HEK293 (cell line): ENCODE measurements at regions of chr1 and their contacts with region 1.

Region 1: DNA sequence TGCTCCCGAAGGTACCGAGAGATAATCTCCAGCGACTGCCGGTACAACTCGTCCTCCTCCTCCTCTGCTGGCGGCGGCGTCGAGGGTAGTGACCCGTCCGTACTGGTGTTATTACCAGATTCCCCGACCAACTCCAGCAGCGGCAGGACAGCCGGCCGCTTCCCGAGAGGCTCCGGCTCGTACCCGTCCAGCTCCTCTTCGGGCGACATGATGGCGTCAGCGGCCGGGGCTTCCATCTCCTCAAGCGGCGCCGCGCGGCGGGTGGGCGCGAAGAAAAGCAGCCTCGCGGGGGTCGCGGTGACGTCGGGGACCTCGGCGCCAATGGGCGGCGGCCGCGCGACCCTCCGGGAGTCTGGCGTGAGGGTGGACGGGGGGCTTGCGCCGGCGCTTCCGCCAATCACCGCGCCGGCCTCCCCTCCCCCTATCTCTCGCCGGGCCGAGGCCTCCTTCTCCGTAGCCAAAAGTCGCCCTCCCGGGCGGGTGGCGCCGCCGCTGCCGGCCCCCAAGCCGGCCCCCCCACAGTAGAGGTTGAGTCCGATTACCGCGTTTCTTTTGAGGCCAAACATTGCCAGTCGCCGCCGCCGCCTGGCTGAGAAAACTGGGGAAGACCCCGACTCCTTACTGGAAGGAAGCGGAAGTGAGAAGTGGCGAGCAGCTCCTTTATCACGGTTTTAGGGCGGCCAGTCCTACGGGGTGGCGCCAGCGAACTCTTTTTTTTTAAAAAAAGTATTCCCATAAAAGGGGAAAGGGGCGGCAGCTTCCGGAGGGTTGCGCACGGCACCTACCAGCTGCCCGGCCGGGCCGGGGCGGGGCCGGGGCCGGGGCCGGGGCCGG is at the start of gene MCL1:
- H3K4me3 ChIP-seq: peak within 1 kb of the TSS; percentile 82
- H3K27ac ChIP-seq: peak within 1 kb of the TSS; percentile 95
- H3K4me1 ChIP-seq: no peaks in the 10 kb centered on the region
- CTCF ChIP-seq: no peak

Region 2: DNA sequence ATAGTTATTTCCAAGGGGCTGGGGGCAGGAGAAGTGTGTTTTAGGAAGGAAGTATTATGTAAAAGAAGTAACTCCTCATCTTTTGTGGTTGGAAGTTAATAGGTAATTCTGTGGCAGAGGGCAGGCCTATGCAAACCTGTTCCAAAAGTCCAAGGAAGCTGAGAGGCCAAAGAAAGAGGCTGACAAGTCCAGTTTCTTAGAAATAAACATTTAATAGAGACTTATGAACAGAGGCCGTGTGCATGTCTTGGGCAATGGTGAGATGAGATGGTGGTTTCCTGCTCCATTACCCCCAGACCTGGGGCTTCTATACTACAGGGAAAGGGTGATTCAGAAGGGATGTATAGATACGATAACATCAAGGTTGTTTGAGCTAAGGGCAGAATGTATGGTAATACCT is 329.2 kb before region 1 on chr1:
- CTCF ChIA-PET with region 1: no interaction called
- POLR2A ChIA-PET with region 1: no interaction called
- H3K4me3 ChIP-seq: no peak overlapping the region
- H3K27ac ChIP-seq: no peak overlapping the region
- H3K4me1 ChIP-seq: no peaks in the 10 kb centered on the region
- CTCF ChIP-seq: no peak

Region 3: DNA sequence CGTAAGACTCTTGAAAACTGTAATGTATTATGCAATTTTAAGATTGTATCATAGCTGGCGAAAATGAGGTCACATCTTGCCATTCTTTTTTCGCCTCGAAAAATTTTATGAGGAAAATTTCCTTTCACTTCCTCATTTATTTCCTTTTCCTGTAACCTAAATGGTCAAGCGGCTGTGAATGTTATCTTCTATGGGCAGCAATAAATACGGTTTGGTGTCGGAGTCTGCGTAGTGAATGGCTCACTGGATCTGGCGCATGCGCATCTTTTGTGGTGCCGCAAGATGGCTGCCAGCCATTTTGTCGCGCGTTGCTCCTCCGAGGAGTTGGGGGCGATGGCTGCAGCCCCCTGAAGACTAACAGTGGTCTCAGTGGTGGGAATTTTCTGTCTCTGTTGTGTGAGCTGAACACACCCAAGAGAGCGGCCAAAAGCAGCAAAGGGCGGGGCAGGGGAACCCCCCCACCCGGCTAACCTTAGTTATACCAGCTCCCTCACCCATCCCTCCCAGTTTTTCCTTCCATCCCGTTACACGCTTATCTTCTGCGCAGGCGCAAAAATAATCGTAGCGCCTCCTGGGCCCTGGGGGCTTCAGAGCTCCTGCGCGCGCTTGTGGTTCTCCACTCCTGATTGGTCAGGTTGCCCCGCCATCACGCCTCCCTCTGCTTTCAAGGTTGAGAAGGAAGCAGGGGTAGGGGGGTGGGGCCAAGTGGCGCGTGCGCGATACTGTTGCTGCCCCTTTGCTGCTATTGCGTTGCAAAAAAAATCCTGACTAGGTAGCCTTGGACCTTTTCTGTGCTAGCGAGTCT is 215.6 kb before region 1 on chr1 and contains the start of gene RPRD2:
- CTCF ChIA-PET with region 1: no interaction called
- POLR2A ChIA-PET with region 1: interaction called, 13 read pairs
- H3K4me3 ChIP-seq: peak within 1 kb of the TSS; percentile 63
- H3K27ac ChIP-seq: peak within 1 kb of the TSS; percentile 84
- H3K4me1 ChIP-seq: no peaks in the 10 kb centered on the region
- CTCF ChIP-seq: no peak

Region 4: GRCh38 chr1:150429805-150430204 is 149.4 kb before region 1 on chr1:
- CTCF ChIA-PET with region 1: no interaction called
- POLR2A ChIA-PET with region 1: no interaction called
- H3K4me3 ChIP-seq: no peak overlapping the region
- H3K27ac ChIP-seq: no peak overlapping the region
- H3K4me1 ChIP-seq: no peaks in the 10 kb centered on the region
- CTCF ChIP-seq: 0 out of 2 replicates have a peak, but pooled peaks have one; percentile 24

Region 5: DNA sequence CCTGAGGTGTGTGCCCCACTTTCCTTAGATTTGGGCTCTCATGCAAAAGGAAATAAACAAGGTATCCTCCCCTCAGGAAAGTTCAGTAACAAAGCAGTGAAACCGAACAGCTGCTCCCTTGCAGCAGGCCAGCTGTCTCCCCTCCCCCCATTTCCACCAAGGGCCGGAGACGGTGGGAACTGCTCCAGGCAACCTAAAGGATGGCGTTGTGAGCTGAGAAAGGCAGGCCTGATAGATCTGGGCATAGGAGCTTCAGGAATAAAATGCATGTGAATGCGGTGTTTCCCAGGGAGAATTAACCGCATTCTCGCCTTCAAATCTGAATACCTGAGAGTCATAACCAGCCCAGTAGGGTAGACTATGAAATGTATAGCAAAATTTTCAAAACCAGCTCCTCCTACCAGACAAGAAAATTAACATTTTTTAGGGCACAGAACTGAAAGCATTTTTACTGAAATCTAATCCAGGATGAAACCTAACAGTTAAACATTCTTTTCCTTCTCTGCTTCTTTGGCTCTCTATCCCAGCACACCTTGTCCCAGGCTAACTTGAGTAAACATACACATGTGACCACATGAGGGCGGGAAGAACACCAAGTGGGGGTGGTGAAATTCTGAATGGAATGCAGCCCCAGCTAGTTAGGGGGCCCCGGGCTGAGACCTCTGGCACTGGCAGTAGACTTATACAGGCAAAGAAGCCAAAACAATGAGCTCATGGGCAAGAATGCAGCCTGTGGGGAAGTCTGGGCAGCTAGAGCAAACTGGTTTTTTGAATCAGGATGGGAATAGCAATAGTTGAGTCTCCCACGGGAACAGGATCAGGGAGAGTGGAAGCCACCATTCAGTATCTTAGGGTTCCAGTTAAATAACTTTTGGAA is 11.2 kb before region 1 on chr1:
- CTCF ChIA-PET with region 1: interaction called, 25 read pairs
- POLR2A ChIA-PET with region 1: interaction called, 272 read pairs
- H3K4me3 ChIP-seq: no peak overlapping the region
- H3K27ac ChIP-seq: peak overlapping the region; percentile 38
- H3K4me1 ChIP-seq: peaks cover 28% of the 10 kb centered on the region
- CTCF ChIP-seq: no peak

Region 6: DNA sequence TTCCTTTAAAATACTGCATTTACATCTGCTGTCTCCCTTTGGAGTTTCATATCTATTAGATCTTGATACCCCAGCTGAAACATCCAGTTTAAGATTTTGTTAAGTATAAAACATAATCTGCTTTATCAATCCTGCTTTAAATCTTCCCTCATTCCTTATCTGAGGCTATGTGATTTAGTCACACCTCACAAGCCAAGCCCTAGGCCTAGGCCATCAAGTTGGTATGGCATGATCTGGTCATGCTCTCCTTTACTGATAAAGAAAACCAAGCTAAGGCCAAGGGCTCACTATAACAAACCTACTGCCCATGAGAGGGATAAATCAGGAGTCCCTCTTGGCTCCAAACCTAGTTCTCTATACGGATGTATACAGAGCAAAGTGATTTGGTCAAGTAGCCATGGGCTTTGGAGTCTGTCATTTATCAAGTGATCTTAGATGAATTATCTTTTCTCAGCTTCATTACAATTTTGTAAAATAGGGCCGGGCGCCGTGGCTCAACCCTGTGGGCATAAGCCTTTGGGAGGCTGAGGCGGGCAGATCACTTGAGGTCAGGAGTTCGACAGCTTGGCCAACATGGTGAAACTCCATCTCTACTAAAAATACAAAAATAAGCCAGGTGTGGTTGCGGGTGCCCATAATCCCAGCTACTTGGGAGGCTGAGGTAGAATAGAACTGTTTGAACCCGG is 27.4 kb after region 1 on chr1:
- CTCF ChIA-PET with region 1: interaction called, 4 read pairs
- POLR2A ChIA-PET with region 1: interaction called, 23 read pairs
- H3K4me3 ChIP-seq: no peak overlapping the region
- H3K27ac ChIP-seq: no peak overlapping the region
- H3K4me1 ChIP-seq: peaks cover 3% of the 10 kb centered on the region; the same call in 1 of the 2 replicates
- CTCF ChIP-seq: no peak

Region 7: GRCh38 chr1:150621497-150622302 is 42.5 kb after region 1 on chr1:
- CTCF ChIA-PET with region 1: interaction called, 10 read pairs
- POLR2A ChIA-PET with region 1: interaction called, 21 read pairs
- H3K4me3 ChIP-seq: no peak overlapping the region
- H3K27ac ChIP-seq: no peak overlapping the region
- H3K4me1 ChIP-seq: peaks cover 5% of the 10 kb centered on the region; the same call in 1 of the 2 replicates
- CTCF ChIP-seq: 0 out of 2 replicates have a peak, but pooled peaks have one; percentile 16

Region 8: GRCh38 chr1:150696590-150697524 is 117.7 kb after region 1 on chr1 and contains the start of gene GOLPH3L:
- CTCF ChIA-PET with region 1: no interaction called
- POLR2A ChIA-PET with region 1: interaction called, 25 read pairs
- H3K4me3 ChIP-seq: peak within 1 kb of the TSS; percentile 63
- H3K27ac ChIP-seq: peak within 1 kb of the TSS; percentile 29; the same call in 1 of the 2 replicates
- H3K4me1 ChIP-seq: no peaks in the 10 kb centered on the region
- CTCF ChIP-seq: no peak